H1 (cell line): ENCODE measurements at regions of chr1 and their contacts with region 1.

Region 1: GRCh38 chr1:109397538-109398342 is at the start of gene SORT1:
- DNase-seq: peak; percentile 93 to 98
- H3K4me3 ChIP-seq: peak within 1 kb of the TSS; percentile 59 to 83 (median 73)
- H3K27ac ChIP-seq: peak within 1 kb of the TSS; percentile 68
- H3K4me1 ChIP-seq: peaks cover 3 to 10% (median 7%) of the 10 kb centered on the region in 4 experiments; a peak in 6 of 7 replicates
- H3K27me3 ChIP-seq: no peaks in the 10 kb centered on the region
- CTCF ChIP-seq: peak; percentile 30 to 40 (median 39)
- EP300 ChIP-seq: no peak
- POLR2A ChIP-seq: peak; percentile 69 to 75
- RAD21 ChIP-seq: peak; percentile 48 to 64; a peak in 3 of 4 replicates
- total RNA-seq, gene SORT1: 67.4 and 69.6 TPM in 2 replicates

Region 2: DNA sequence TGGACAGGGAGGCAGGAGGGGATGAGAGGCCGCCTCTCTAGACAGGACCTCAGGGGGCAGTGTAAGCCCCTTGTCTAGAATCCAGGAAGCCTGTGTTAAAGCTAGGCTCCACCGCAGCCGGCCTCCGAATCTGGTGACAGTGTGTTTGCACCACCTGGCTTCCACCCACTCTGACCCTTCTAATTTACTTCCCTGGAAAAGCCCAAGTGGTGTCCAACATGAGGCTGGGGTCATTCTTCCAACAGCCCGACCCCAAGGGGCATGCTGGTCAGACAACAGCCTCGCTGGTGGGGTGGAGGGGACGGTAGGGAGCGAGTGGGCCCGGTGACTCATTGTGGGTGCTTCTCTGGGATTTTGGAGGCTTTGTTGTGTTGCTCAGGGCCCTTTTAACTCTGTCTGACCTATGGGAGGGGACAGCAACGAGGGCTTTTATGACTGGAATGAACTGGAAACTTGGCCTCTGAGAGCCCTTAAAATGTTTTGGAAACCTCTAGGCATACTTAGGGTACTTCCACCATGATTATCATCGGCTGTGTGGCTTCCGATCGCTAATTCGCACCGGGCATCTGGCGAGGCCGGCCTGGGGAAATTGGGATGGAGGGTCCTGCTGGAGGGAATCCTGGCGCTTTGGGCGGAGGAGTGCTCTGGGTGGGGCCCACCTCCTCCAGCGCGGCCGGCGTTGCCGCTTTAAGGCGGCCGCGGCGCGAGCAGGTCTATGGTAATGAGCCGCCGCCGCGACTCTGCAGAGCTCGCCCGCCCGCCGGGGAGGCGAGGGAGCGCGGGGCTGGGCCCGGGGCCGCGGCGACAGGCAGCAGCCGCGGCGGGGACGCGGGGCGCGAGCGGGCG is 148.7 kb before region 1 on chr1 and contains the start of gene CELSR2:
- CTCF ChIA-PET with region 1: interaction called, 32 read pairs
- POLR2A ChIA-PET with region 1: interaction called, 5 read pairs
- DNase-seq: peak; percentile 66 to 90
- H3K4me3 ChIP-seq: peak within 1 kb of the TSS; percentile 28 to 62 (median 34); a peak in 7 of 8 replicates
- H3K27ac ChIP-seq: no peak within 1 kb of the TSS; the same call in 1 of the 2 replicates
- H3K4me1 ChIP-seq: peaks cover 0 to 23% (median 20%) of the 10 kb centered on the region in 4 experiments; a peak in 6 of 7 replicates
- H3K27me3 ChIP-seq: peaks cover 0 to 22% (median 16%) of the 10 kb centered on the region in 4 experiments; a peak in 5 of 7 replicates
- CTCF ChIP-seq: peak in 1 of 3 experiments; percentile 38; a peak in 2 of 4 replicates
- EP300 ChIP-seq: no peak
- POLR2A ChIP-seq: no peak
- RAD21 ChIP-seq: peak in 1 of 2 experiments; percentile 16; a peak in 1 of 4 replicates
- total RNA-seq, gene CELSR2: 27.7 and 28.0 TPM in 2 replicates

Region 3: GRCh38 chr1:109277434-109278204 is 120.1 kb before region 1 on chr1:
- CTCF ChIA-PET with region 1: interaction called, 113 read pairs
- POLR2A ChIA-PET with region 1: interaction called, 18 read pairs
- DNase-seq: peak; percentile 81 to 94
- H3K4me3 ChIP-seq: no peak overlapping the region
- H3K27ac ChIP-seq: 0 out of 2 replicates have a peak overlapping the region, but pooled peaks have one; percentile 20
- H3K4me1 ChIP-seq: peaks cover 4 to 19% (median 10%) of the 10 kb centered on the region in 4 experiments; a peak in 6 of 7 replicates
- H3K27me3 ChIP-seq: no peaks in the 10 kb centered on the region
- CTCF ChIP-seq: peak; percentile 91 to 100 (median 99)
- EP300 ChIP-seq: no peak
- POLR2A ChIP-seq: no peak; a peak in 1 of 3 replicates
- RAD21 ChIP-seq: peak; percentile 88 to 89

Region 4: GRCh38 chr1:109307274-109308021 is 90.3 kb before region 1 on chr1:
- CTCF ChIA-PET with region 1: interaction called, 21 read pairs
- POLR2A ChIA-PET with region 1: interaction called, 13 read pairs
- DNase-seq: no peak
- H3K4me3 ChIP-seq: no peak overlapping the region
- H3K27ac ChIP-seq: no peak overlapping the region
- H3K4me1 ChIP-seq: peaks cover 0 to 9% (median 3%) of the 10 kb centered on the region in 4 experiments; a peak in 2 of 7 replicates
- H3K27me3 ChIP-seq: no peaks in the 10 kb centered on the region
- CTCF ChIP-seq: no peak
- EP300 ChIP-seq: no peak
- POLR2A ChIP-seq: no peak
- RAD21 ChIP-seq: no peak

Region 5: GRCh38 chr1:109385417-109385816 is 12.3 kb before region 1 on chr1:
- CTCF ChIA-PET with region 1: interaction called, 26 read pairs
- POLR2A ChIA-PET with region 1: interaction called, 13 read pairs
- DNase-seq: no peak
- H3K4me3 ChIP-seq: no peak overlapping the region
- H3K27ac ChIP-seq: no peak overlapping the region
- H3K4me1 ChIP-seq: peaks cover 0 to 16% (median 3%) of the 10 kb centered on the region in 4 experiments; a peak in 3 of 7 replicates
- H3K27me3 ChIP-seq: no peaks in the 10 kb centered on the region
- CTCF ChIP-seq: no peak
- EP300 ChIP-seq: no peak
- POLR2A ChIP-seq: no peak
- RAD21 ChIP-seq: no peak

Region 6: DNA sequence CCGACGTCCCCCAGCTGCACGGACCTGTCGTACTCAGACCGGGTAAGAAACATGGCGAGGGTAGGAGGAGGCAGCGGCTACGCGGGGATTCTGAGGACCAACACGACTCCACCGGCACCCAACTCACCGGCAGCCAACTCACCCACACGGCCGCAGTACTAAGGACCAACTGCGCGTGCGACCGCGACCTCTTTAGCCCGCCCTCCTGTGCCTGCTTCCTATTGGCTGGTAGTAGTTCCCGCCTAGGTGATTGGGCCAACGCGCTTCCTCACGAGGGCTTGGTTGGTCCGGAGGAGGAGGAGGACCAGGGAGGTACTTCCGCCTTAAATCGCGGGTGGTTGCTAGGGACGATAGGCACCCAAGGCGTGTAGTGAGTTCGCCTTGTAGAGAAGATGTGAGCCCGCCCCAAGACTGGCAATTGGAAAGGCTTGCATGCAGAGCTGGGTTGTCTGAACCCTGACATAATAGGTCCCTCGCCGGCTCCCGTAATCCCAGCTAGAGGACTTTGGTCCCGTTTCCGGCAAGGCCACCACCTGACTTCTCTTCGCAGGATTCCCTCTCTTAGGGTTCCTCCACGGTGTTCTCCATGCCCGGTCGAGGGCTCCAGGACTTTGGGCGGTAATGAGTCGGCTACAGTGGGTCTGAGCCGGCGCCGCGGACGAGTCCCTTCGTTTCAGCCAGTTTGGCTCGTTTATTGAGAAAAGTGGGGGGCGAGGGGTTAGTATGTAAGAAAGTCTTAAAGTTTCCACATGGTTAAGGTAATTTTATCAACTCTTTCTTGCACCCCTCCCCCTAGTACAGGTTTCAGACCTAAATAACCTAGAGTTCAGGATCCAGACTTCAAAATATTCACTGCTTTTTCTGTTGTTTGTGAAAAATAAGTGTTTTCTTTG is 28.8 kb after region 1 on chr1 and contains the start of gene PSMA5:
- CTCF ChIA-PET with region 1: interaction called, 4 read pairs
- POLR2A ChIA-PET with region 1: interaction called, 12 read pairs
- DNase-seq: peak; percentile 88 to 94
- H3K4me3 ChIP-seq: peak within 1 kb of the TSS; percentile 80 to 99 (median 95)
- H3K27ac ChIP-seq: peak within 1 kb of the TSS; percentile 78
- H3K4me1 ChIP-seq: no peaks in the 10 kb centered on the region; a peak in 1 of 7 replicates
- H3K27me3 ChIP-seq: no peaks in the 10 kb centered on the region
- CTCF ChIP-seq: no peak
- EP300 ChIP-seq: no peak
- POLR2A ChIP-seq: peak; percentile 88 to 98
- RAD21 ChIP-seq: no peak
- total RNA-seq, gene PSMA5: 147 and 166 TPM in 2 replicates